GM12878 (cell line): ENCODE measurements at regions of chr6 and their contacts with region 1.

Region 1: DNA sequence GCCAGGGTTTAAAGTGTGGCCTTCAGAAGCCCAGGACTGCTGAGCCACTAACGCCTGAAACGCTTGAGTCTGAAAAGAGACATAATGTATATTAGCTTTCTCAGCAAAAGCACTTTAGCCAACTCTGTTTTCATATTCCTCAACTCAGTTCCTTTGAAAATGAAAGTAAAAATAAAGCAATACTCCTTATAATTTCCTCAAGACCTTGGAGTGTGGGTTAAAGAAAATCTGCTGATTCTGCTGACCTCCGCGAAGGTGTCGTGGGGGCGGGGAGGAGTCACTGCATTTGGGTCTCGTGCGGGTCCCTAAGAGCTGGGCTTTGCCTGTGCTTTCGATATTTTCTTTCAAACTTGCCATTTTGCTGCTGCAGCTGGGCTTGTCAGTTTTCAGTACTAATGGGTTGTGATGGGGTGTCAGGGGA is 142.2 kb upstream of the ARID1B start:
- DNase-seq: no peak
- ATAC-seq: no peak
- H3K4me3 ChIP-seq: no peak overlapping the region; the same call in 1 of the 2 replicates
- H3K27ac ChIP-seq: peak overlapping the region; percentile 83
- H3K4me1 ChIP-seq: peaks cover 32% of the 10 kb centered on the region
- H3K27me3 ChIP-seq: no peaks in the 10 kb centered on the region
- CTCF ChIP-seq: no peak
- EP300 ChIP-seq: no peak
- POLR2A ChIP-seq: no peak
- RAD21 ChIP-seq: no peak

Region 2: DNA sequence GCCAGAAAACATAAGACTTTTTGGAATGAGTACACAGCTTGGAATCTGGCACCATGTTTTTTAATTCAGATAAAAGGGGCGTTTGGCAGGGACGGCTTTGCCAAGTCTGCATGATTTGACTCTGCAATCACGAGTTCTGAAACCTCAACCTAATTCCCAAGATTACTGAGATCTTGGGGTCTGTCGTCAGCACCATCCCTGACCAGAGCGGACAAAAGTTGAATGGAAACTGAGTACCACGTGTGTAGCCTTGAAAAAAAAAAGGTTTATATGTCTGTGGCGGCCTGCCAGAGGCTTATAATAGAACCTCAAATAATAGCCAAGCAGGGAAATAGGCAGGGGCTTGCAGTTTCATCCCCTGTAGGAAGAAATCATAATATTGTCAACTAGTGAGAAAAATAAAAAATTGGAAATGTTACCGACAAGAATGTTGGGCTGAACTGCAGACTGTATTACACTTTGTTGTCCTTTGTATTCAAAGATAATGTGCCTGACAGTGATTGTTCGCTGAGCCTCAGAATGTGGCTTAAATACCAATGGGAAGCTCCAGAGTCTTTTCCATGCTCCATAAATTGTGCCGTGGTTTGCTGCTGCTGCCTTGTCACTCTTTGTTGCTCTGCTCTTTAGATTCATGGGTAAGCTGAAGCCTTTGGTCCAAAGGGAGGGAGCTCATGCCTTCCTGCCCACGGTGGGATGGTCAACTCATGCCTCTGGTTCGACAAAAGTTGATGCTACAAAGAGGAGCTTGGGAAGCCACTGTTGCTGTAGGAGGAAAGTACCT is 23.4 kb after region 1 on chr6:
- CTCF ChIA-PET with region 1: interaction called, 5 read pairs
- POLR2A ChIA-PET with region 1: interaction called, 6 read pairs
- RAD21 ChIA-PET with region 1: interaction called, 7 read pairs
- SMC1A ChIA-PET with region 1: interaction called, 19 read pairs
- in situ Hi-C with region 1: no loop called
- intact Hi-C with region 1: no loop called
- DNase-seq: no peak
- ATAC-seq: no peak
- H3K4me3 ChIP-seq: no peak overlapping the region
- H3K27ac ChIP-seq: no peak overlapping the region
- H3K4me1 ChIP-seq: peaks cover 17% of the 10 kb centered on the region
- H3K27me3 ChIP-seq: no peaks in the 10 kb centered on the region
- CTCF ChIP-seq: no peak
- EP300 ChIP-seq: no peak
- POLR2A ChIP-seq: no peak
- RAD21 ChIP-seq: no peak

Region 3: GRCh38 chr6:156686995-156687788 is 52.2 kb after region 1 on chr6:
- CTCF ChIA-PET with region 1: interaction called, 20 read pairs
- POLR2A ChIA-PET with region 1: interaction called, 12 read pairs
- RAD21 ChIA-PET with region 1: interaction called, 40 read pairs
- SMC1A ChIA-PET with region 1: interaction called, 42 read pairs
- in situ Hi-C with region 1: no loop called
- intact Hi-C with region 1: loop called (anchors 1 kb)
- DNase-seq: no peak
- ATAC-seq: peak; percentile 69
- H3K4me3 ChIP-seq: peak overlapping the region; percentile 93
- H3K27ac ChIP-seq: peak overlapping the region; percentile 98
- H3K4me1 ChIP-seq: peaks cover 48% of the 10 kb centered on the region
- H3K27me3 ChIP-seq: no peaks in the 10 kb centered on the region
- CTCF ChIP-seq: no peak
- EP300 ChIP-seq: peak in 1 of 2 experiments; percentile 27; a peak in 1 of 4 replicates
- POLR2A ChIP-seq: peak; percentile 85
- RAD21 ChIP-seq: no peak; the same call in 1 of the 2 replicates

Region 4: GRCh38 chr6:156767603-156768467 is 132.9 kb after region 1 on chr6:
- CTCF ChIA-PET with region 1: interaction called, 3 read pairs
- POLR2A ChIA-PET with region 1: no interaction called
- RAD21 ChIA-PET with region 1: interaction called, 10 read pairs
- SMC1A ChIA-PET with region 1: interaction called, 10 read pairs
- in situ Hi-C with region 1: no loop called
- intact Hi-C with region 1: no loop called
- DNase-seq: peak; percentile 90
- ATAC-seq: peak; percentile 96
- H3K4me3 ChIP-seq: peak overlapping the region; percentile 56; the same call in 1 of the 2 replicates
- H3K27ac ChIP-seq: peak overlapping the region; percentile 63
- H3K4me1 ChIP-seq: peaks cover 19% of the 10 kb centered on the region
- H3K27me3 ChIP-seq: no peaks in the 10 kb centered on the region
- CTCF ChIP-seq: no peak
- EP300 ChIP-seq: peak; percentile 20 to 54; a peak in 3 of 4 replicates
- POLR2A ChIP-seq: no peak
- RAD21 ChIP-seq: 0 out of 2 replicates have a peak, but pooled peaks have one; percentile 15

Region 5: GRCh38 chr6:156781861-156782631 is 147.1 kb after region 1 on chr6:
- CTCF ChIA-PET with region 1: interaction called, 3 read pairs
- POLR2A ChIA-PET with region 1: interaction called, 9 read pairs
- RAD21 ChIA-PET with region 1: interaction called, 30 read pairs
- SMC1A ChIA-PET with region 1: interaction called, 10 read pairs
- in situ Hi-C with region 1: no loop called
- intact Hi-C with region 1: loop called (anchors 2 kb)
- DNase-seq: no peak
- ATAC-seq: no peak
- H3K4me3 ChIP-seq: peak overlapping the region; percentile 89
- H3K27ac ChIP-seq: peak overlapping the region; percentile 93
- H3K4me1 ChIP-seq: peaks cover 6% of the 10 kb centered on the region; the same call in 1 of the 2 replicates
- H3K27me3 ChIP-seq: no peaks in the 10 kb centered on the region
- CTCF ChIP-seq: no peak
- EP300 ChIP-seq: no peak
- POLR2A ChIP-seq: no peak
- RAD21 ChIP-seq: no peak